ENCODE measurements at regions of chr17 and their contacts with region 1.

Region 1: GRCh38 chr17:33674685-33675084 is 381.6 kb upstream of the ASIC2 start:
- DNase-seq: peak; percentile 50
- H3K4me3 ChIP-seq: no peak overlapping the region
- H3K27ac ChIP-seq: no peak overlapping the region
- H3K4me1 ChIP-seq: no peaks in the 10 kb centered on the region
- H3K27me3 ChIP-seq: no peaks in the 10 kb centered on the region
- CTCF ChIP-seq: peak; percentile 65

Region 2: GRCh38 chr17:33049781-33050414 is 624.8 kb before region 1 on chr17:
- intact Hi-C with region 1: loop called (anchors 10 kb)
- DNase-seq: peak; percentile 68
- H3K4me3 ChIP-seq: no peak overlapping the region
- H3K27ac ChIP-seq: no peak overlapping the region
- H3K4me1 ChIP-seq: no peaks in the 10 kb centered on the region
- H3K27me3 ChIP-seq: no peaks in the 10 kb centered on the region
- CTCF ChIP-seq: peak; percentile 75

Region 3: GRCh38 chr17:33520426-33521330 is 154.0 kb before region 1 on chr17:
- intact Hi-C with region 1: loop called (anchors 5 kb)
- DNase-seq: peak; percentile 43
- H3K4me3 ChIP-seq: no peak overlapping the region
- H3K27ac ChIP-seq: no peak overlapping the region
- H3K4me1 ChIP-seq: no peaks in the 10 kb centered on the region
- H3K27me3 ChIP-seq: no peaks in the 10 kb centered on the region
- CTCF ChIP-seq: peak; percentile 59

Region 4: GRCh38 chr17:33864758-33865229 is 190.1 kb after region 1 on chr17:
- intact Hi-C with region 1: no loop called
- DNase-seq: no peak
- H3K4me3 ChIP-seq: no peak overlapping the region
- H3K27ac ChIP-seq: no peak overlapping the region
- H3K4me1 ChIP-seq: no peaks in the 10 kb centered on the region
- H3K27me3 ChIP-seq: no peaks in the 10 kb centered on the region
- CTCF ChIP-seq: no peak

Measured in colonic mucosa (tissue), 4 donors.